ENCODE measurements at regions of chr14 and their contacts with region 1.

Region 1: GRCh38 chr14:87805315-87805723 is 187.7 kb downstream of the GALC start:
- DNase-seq: peak; percentile 72
- H3K4me3 Mint-ChIP-seq: no peak overlapping the region
- H3K27ac Mint-ChIP-seq: no peak overlapping the region
- H3K4me1 Mint-ChIP-seq: peaks cover 3% of the 10 kb centered on the region
- H3K27me3 Mint-ChIP-seq: no peaks in the 10 kb centered on the region

Region 2: DNA sequence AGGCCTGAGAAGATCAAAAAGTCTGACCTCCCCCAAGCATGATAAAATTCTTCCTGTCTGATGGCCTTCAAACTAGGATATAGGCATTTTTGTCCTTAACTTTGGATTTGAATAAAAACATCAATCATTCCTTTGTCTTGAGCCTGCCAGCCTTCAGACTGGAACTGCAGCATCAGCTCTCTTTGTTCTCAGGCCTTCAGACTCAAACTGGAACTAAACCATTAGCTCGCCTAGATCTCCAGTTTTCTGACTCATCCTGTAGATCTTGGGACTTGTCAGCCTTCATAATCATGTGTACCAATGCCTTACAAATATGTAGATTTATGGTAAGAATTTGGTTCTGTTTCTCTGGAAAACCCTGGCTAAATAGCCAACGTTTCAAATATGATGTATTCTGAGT is 534.0 kb before region 1 on chr14:
- CTCF ChIA-PET with region 1: no interaction called
- POLR2A ChIA-PET with region 1: no interaction called
- intact Hi-C with region 1: no loop called
- DNase-seq: no peak
- H3K4me3 Mint-ChIP-seq: no peak overlapping the region
- H3K27ac Mint-ChIP-seq: no peak overlapping the region
- H3K4me1 Mint-ChIP-seq: no peaks in the 10 kb centered on the region
- H3K27me3 Mint-ChIP-seq: no peaks in the 10 kb centered on the region

Region 3: DNA sequence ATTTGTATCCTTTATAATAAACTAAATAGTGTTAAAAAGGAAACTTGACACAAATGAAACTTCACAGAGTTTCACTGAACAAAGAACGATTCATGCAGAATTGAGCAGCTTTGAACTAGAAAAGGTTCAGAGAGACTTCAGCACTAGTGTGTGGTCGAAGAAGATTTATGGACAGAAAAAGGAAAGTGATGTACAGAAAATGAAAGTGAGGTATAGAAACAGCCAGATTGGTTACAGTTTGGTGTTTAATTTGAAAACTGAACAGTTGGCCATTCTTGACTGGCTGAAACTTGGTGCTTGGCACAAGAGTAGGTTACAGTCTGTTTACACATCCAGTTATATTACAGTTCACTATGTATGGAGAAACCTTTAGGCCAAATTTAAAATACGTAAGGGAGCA is 19.4 kb before region 1 on chr14:
- CTCF ChIA-PET with region 1: interaction called, 13 read pairs
- POLR2A ChIA-PET with region 1: no interaction called
- intact Hi-C with region 1: no loop called
- DNase-seq: no peak
- H3K4me3 Mint-ChIP-seq: no peak overlapping the region
- H3K27ac Mint-ChIP-seq: no peak overlapping the region
- H3K4me1 Mint-ChIP-seq: no peaks in the 10 kb centered on the region
- H3K27me3 Mint-ChIP-seq: peaks cover 2% of the 10 kb centered on the region

Region 4: GRCh38 chr14:87794561-87794960 is 10.8 kb before region 1 on chr14:
- CTCF ChIA-PET with region 1: interaction called, 13 read pairs
- POLR2A ChIA-PET with region 1: no interaction called
- intact Hi-C with region 1: no loop called
- DNase-seq: no peak
- H3K4me3 Mint-ChIP-seq: no peak overlapping the region
- H3K27ac Mint-ChIP-seq: no peak overlapping the region
- H3K4me1 Mint-ChIP-seq: no peaks in the 10 kb centered on the region
- H3K27me3 Mint-ChIP-seq: no peaks in the 10 kb centered on the region

Region 5: GRCh38 chr14:87816416-87816815 is 11.1 kb after region 1 on chr14:
- CTCF ChIA-PET with region 1: interaction called, 11 read pairs
- POLR2A ChIA-PET with region 1: no interaction called
- intact Hi-C with region 1: no loop called
- DNase-seq: no peak
- H3K4me3 Mint-ChIP-seq: no peak overlapping the region
- H3K27ac Mint-ChIP-seq: no peak overlapping the region
- H3K4me1 Mint-ChIP-seq: no peaks in the 10 kb centered on the region
- H3K27me3 Mint-ChIP-seq: no peaks in the 10 kb centered on the region

Region 6: DNA sequence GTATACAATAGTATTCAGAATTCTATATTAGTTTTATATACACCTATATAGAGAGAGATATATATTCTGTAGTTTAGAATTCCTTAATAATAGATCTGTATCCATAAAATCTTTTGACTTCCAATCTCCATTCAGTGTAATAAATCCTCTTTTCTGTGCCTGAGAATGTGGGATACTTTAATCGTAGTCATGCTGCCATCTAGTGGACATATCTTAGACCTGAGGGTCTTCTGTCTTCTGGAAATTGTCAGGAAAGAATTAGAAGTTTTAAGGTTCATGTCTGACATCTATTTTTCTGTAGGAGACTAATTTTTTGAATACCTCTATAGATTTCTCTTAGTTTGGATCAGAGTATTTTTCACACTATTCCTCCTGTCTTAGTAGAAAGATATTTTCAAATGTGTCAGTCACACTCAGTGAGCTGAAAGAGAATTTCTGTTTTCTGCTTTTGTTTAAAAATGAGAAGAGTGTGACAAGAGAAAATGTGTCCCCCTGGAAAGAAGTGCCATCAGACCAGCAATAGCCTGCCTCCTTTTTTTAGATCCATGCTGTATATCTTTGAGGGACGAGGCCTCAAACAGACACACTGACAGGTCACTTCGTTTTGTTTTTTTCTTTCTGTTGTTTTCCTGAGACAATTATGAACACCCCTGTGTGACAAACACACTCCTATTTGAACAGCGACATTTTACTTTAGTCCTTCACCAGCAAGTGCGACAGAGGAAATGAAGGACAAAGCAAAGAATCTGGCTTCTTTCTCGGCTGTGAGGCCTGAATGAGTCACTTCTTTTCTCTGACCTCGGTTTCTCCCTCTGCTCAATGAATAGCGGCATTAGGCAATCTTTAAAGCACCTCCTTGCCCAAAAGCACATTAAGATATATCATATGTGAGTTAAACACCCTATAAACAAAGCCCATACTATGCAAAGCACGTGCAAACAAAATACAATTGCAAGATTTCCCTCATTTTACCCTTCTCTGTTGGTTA is 91.4 kb after region 1 on chr14:
- CTCF ChIA-PET with region 1: interaction called, 105 read pairs
- POLR2A ChIA-PET with region 1: no interaction called
- intact Hi-C with region 1: loop called (anchors 1 kb)
- DNase-seq: no peak
- H3K4me3 Mint-ChIP-seq: no peak overlapping the region
- H3K27ac Mint-ChIP-seq: no peak overlapping the region
- H3K4me1 Mint-ChIP-seq: no peaks in the 10 kb centered on the region
- H3K27me3 Mint-ChIP-seq: peaks cover 2% of the 10 kb centered on the region

Region 7: DNA sequence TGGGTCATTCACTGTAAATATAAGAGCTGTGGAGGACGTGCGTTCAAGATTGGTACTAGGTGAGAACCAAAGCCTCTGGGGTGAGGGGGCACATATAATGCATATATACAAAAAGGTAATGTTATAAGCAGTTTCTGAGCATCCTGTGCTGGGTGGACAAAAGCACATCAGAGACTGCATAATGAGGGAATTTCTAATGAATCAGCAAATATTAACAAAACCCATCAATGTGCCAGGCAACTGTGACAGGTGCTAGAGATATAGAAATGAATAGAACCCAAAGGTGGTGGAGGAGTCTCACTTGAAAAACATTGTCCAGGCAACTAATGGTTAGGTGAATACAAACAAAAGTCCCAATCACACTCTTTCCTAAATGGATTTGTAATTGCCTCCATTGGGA is 274.3 kb after region 1 on chr14:
- CTCF ChIA-PET with region 1: no interaction called
- POLR2A ChIA-PET with region 1: no interaction called
- intact Hi-C with region 1: no loop called
- DNase-seq: no peak
- H3K4me3 Mint-ChIP-seq: no peak overlapping the region
- H3K27ac Mint-ChIP-seq: no peak overlapping the region
- H3K4me1 Mint-ChIP-seq: no peaks in the 10 kb centered on the region
- H3K27me3 Mint-ChIP-seq: no peaks in the 10 kb centered on the region

Measured in activated CD4-positive, alpha-beta memory T cell treated with anti-CD3 and anti-CD28 coated beads for 36 hours (primary cell).